ENCODE measurements at regions of chr1 and their contacts with region 1.

Region 1: GRCh38 chr1:232038706-232039677 is 412.4 kb downstream of the DISC1 start:
- DNase-seq: peak in 4 of 5 donors; percentile 33 to 58 (median 41)
- ATAC-seq: peak; percentile 34 to 79 (median 64)
- H3K4me3 ChIP-seq: no peak overlapping the region
- H3K27ac ChIP-seq: no peak overlapping the region
- H3K4me1 ChIP-seq: peaks cover 0 to 14% (median 0%) of the 10 kb centered on the region in 12 donors
- H3K27me3 ChIP-seq: no peaks in the 10 kb centered on the region
- CTCF ChIP-seq: no peak
- POLR2A ChIP-seq: no peak

Region 2: DNA sequence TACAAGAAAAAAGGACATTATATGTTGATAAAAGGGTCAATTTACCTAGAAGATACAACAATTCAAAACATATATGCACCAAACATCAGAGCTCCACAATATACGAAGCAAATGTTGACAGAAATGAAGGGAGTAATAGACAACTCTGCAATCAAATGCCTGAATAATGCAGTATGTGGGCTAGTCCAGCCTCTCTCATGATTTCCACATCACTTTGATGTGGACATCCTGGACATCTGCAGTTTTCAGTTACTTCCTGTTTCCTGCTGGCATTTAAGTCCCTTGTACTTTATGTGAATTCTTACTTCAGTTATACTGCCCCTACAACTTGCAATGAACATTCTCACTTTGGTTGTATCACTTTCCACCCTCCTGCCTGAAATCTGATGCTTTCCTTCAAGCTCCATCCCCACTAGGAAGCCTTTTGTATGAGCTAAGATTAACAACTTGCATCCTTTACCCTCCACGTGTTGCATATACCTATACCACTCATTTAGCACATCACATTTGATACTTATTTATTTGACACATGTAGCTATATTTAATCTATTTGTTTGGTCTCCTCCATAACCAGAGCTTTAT is 375.7 kb before region 1 on chr1:
- intact Hi-C with region 1: no loop called
- DNase-seq: no peak
- ATAC-seq: peak in 3 of 4 donors; percentile 33 to 49 (median 41)
- H3K4me3 ChIP-seq: no peak overlapping the region
- H3K27ac ChIP-seq: no peak overlapping the region
- H3K4me1 ChIP-seq: peaks cover 0 to 16% (median 0%) of the 10 kb centered on the region in 12 donors
- H3K27me3 ChIP-seq: no peaks in the 10 kb centered on the region
- CTCF ChIP-seq: no peak
- POLR2A ChIP-seq: no peak

Region 3: GRCh38 chr1:232416026-232416568 is 377.1 kb after region 1 on chr1:
- intact Hi-C with region 1: loop called in 1 of 10 experiments (anchors 10 kb)
- DNase-seq: no peak
- ATAC-seq: no peak
- H3K4me3 ChIP-seq: no peak overlapping the region
- H3K27ac ChIP-seq: no peak overlapping the region
- H3K4me1 ChIP-seq: no peaks in the 10 kb centered on the region
- H3K27me3 ChIP-seq: no peaks in the 10 kb centered on the region
- CTCF ChIP-seq: no peak
- POLR2A ChIP-seq: no peak

Measured in heart left ventricle (tissue), 16 donors.